Gastrocnemius medialis (tissue), 4 donors: ENCODE measurements at regions of chr22 and their contacts with region 1.

Region 1: DNA sequence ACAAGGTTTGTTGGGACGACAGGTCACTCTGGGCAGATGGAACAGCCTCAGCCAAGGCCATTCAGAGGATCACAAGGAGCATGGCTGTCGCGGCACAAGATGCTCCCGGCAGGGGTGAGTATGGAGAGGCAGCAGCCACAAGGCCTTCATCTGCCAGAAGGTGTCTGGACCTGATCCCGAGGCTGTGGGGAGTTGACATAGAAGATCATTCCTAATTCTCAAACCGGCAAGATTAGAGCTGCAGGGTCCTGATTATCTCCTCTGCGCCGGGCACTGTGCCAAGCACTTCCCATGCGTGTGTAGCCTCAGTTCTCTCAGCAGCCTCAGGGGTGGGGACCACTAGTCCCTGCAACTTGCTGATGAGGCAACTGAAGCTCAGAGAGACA is 32.3 kb upstream of the RFPL3 start:
- DNase-seq: no peak
- ATAC-seq: no peak
- H3K4me3 ChIP-seq: no peak overlapping the region
- H3K27ac ChIP-seq: no peak overlapping the region
- H3K4me1 ChIP-seq: no peaks in the 10 kb centered on the region
- H3K27me3 ChIP-seq: no peaks in the 10 kb centered on the region
- CTCF ChIP-seq: no peak
- POLR2A ChIP-seq: no peak

Region 2: GRCh38 chr22:32237906-32238305 is 87.5 kb before region 1 on chr22:
- in situ Hi-C with region 1: loop called in 1 of 4 experiments (anchors 25 kb)
- intact Hi-C with region 1: no loop called
- DNase-seq: no peak
- ATAC-seq: no peak
- H3K4me3 ChIP-seq: no peak overlapping the region
- H3K27ac ChIP-seq: no peak overlapping the region
- H3K4me1 ChIP-seq: no peaks in the 10 kb centered on the region
- H3K27me3 ChIP-seq: peaks cover 0 to 5% (median 4%) of the 10 kb centered on the region in 3 donors
- CTCF ChIP-seq: no peak
- POLR2A ChIP-seq: no peak

Region 3: DNA sequence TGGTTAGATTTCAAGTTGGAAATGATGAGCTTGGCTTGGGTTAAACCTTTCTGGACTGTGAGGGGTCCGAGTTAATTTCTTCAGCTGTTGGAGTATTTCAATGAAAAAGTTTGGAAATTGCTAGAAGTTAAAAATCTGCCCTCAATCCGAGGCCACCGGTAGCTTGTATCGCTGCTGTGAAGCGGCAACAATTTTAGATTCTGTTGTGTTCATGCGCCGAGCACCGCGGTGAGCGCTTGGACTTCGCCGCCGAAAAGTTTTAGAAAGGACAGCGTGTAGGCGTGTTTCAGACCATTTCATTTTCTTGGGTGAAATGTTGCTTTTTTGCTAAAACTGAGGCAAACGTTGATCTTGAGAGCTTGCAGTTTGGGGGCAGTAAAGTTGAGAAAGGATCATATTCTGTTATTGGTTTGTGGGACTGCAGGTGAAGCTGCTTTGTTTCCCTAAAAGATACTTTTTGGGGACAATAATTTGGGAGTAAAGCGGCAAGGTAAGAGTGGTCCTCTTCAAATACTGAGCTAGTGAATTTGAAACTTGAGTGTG is 150.1 kb after region 1 on chr22:
- in situ Hi-C with region 1: no loop called
- intact Hi-C with region 1: no loop called
- DNase-seq: peak; percentile 16 to 18
- ATAC-seq: peak; percentile 32 to 67
- H3K4me3 ChIP-seq: peak overlapping the region; percentile 78 to 98 (median 84)
- H3K27ac ChIP-seq: peak overlapping the region; percentile 92 to 99 (median 94)
- H3K4me1 ChIP-seq: peaks cover 25 to 29% of the 10 kb centered on the region in 2 donors
- H3K27me3 ChIP-seq: no peaks in the 10 kb centered on the region
- CTCF ChIP-seq: no peak
- POLR2A ChIP-seq: no peak